ENCODE measurements at regions of chr3 and their contacts with region 1.

Region 1: DNA sequence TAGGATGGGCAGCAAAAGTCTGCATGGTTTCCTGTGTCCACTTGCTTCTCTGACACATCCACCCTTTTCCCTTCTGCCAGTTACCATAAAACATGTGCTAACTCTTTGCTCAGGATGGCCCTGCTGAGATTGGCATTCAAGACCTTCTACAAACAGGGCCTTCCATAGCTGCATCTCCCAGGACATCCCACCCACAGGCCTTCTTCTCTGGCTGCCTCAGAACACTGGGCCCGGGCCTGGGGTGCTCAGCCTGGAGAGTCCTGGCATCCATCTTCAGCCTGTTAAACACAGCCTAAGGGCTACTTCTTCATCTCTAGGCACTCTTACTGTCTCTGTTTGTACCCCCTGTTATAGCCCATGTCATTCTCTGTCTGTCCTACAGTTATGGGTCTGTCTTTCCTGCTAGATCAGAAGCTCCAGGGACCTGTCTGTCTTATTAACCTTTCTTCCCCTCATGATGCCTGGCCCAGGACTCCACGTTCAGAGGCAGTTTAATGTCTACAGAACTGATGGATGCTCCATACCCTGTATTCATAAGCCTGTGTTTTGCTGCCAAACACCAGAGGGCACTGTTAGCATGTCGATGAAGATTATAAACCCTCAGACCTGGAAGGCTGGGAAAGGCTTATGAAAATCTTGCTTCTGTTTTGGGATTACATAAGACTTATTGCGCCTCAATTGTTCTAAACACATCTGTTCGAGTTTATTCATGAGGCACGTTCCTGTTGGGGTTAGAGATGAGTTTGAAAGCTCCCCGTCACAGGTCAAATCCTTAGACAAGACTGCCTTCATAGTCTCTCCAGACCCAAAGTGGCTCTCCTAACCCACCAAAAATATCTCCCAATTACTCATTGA is 16.5 kb downstream of the SEMA3G start:
- DNase-seq: peak; percentile 54
- H3K4me3 Mint-ChIP-seq: no peak overlapping the region
- H3K27ac Mint-ChIP-seq: no peak overlapping the region
- H3K4me1 Mint-ChIP-seq: peaks cover 1% of the 10 kb centered on the region
- H3K27me3 Mint-ChIP-seq: peaks cover 6% of the 10 kb centered on the region

Region 2: DNA sequence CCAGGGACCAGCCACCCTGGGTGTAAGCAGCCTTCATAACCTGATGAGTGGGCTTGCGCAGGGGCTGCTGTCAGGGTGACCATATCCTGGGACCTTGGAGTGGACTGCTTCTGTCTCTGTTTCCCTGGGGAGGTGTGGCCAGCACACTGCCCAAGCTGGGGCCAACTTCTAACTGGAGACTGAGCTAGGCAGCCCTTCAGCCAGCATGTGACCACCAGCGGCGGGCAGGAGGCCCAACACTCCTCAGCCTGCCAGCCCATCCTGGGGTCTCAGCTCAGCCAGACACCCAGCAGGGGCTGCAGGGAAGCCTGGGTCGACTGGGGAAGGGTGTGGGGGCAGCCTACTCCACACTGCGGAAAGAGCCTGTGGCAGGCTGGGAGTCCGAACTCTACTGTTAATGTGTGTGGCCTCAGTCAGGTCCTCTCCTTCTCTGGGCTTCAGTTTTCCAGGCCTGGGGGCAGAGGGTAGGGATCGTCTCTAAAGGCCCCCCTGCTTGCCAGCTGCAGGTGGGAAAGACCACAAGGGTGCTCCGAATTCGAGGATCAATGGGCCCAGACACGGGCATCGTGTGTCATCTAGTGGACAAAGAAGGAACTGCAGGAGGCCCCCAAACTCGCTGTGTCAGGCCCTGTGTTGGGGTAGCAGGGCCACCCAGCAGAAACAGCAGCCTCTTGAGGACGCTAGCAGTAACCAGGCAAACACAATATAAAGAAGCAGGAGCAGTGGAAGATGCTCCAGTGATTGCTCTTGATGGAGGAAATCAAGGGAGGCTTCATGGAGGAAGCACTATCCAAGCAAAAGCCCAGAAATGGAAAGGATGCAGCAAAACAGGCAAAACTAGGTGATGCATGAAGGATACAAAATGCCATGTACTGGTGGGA is 18.5 kb after region 1 on chr3:
- CTCF ChIA-PET with region 1: interaction called, 13 read pairs
- POLR2A ChIA-PET with region 1: no interaction called
- DNase-seq: peak; percentile 79
- H3K4me3 Mint-ChIP-seq: no peak overlapping the region
- H3K27ac Mint-ChIP-seq: no peak overlapping the region
- H3K4me1 Mint-ChIP-seq: peaks cover 11% of the 10 kb centered on the region
- H3K27me3 Mint-ChIP-seq: no peaks in the 10 kb centered on the region

Measured in activated CD4-positive, alpha-beta T cell treated with anti-CD3 and anti-CD28 coated beads, Interleukin-2, amount 10 ng/mL, durations not matched to agents 7 days and 5 days (primary cell).